ENCODE measurements at regions of chr20 and their contacts with region 1.

Region 1: DNA sequence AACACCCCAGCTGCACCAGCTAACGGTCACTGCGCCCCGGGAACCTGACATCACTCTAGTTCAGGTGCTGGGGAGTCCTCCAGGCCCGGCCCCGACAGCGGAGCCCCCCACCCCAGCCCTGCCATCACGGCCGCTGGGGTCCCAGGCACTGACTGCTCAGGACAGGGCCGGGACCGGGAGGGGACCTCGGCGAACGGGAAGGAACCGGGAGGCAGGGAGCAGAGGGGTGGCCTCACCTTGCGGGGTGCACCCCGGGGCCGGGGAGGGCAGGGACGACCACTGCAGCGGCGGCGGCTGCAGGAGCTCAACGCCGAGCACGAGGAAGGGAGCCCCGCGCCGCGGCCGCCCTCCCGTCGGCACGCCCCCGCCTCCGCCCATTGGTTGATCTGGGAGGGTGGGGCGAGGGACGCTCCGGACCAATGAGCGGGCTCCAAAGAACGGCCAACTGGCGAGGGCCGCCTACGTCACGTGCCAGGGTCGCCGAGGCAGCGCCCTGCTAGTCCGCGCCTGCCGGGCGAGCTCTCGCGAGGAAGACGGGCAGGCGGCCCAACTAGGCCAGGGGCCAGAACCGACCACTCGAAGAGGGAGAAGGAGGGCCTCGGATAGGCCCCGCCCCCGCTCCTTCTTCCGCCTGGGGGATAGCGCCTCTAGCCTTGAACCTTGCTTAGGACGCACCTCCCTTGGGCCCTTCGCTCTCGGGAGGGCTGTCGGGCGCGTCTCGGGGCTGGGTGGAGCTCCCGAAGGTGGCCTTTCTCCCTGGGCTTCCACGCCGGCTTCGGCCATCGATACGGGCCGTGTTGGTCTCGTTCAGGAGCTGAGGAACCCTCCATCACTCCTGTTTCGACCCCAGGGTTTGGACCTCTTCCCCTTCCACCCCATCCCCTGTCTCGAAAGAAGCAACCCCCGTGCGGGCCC is at the start of gene ADISSP:
- DNase-seq: peak; percentile 99
- ATAC-seq: peak; percentile 94
- H3K4me3 Mint-ChIP-seq: peak within 1 kb of the TSS; percentile 84
- H3K27ac Mint-ChIP-seq: peak within 1 kb of the TSS; percentile 88
- H3K4me1 Mint-ChIP-seq: peaks cover 23% of the 10 kb centered on the region
- H3K27me3 Mint-ChIP-seq: peaks cover 9% of the 10 kb centered on the region
- total RNA-seq, gene ADISSP: 32.5 to 37.0 TPM

Region 2: DNA sequence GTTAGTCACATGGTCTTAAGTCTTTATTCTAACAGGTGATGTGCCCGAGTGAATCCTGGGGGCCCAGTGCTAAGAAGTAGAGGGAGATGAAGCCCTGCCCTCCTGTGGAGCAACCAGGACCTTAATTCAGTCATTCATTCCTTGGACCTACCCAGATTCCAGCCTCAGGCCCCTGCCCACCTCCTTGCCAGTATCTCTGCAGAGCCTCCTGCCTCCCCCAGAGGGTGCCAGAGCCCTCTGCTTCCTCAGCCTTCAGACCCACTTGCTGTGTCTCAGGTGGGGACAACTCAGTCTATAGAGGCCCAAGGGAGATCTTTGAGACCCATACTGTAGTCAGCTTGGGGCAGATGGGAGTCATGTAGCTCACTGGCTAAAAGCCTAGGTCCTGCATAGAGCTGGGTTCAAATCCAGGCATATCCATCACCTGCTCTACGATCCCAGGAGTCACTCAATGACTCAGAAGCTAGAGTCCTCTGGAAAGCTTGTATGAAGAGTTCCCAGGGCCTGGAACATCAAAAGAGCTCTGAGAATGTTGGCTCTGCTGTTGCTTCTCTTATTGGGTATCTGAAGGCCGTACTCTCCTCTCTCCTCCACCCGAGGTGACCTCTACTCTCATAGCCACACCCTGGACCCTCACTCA is 51.4 kb before region 1 on chr20:
- CTCF ChIA-PET with region 1: interaction called, 10 read pairs
- DNase-seq: peak; percentile 57
- ATAC-seq: peak; percentile 88
- H3K4me3 Mint-ChIP-seq: no peak overlapping the region
- H3K27ac Mint-ChIP-seq: no peak overlapping the region
- H3K4me1 Mint-ChIP-seq: peaks cover 16% of the 10 kb centered on the region
- H3K27me3 Mint-ChIP-seq: peaks cover 21% of the 10 kb centered on the region

Region 3: GRCh38 chr20:3781153-3781910 is 13.6 kb after region 1 on chr20 and contains the start of gene SPEF1:
- CTCF ChIA-PET with region 1: interaction called, 37 read pairs
- DNase-seq: peak; percentile 65
- ATAC-seq: peak; percentile 49
- H3K4me3 Mint-ChIP-seq: peak within 1 kb of the TSS; percentile 27
- H3K27ac Mint-ChIP-seq: peak within 1 kb of the TSS; percentile 5
- H3K4me1 Mint-ChIP-seq: peaks cover 43% of the 10 kb centered on the region
- H3K27me3 Mint-ChIP-seq: peaks cover 25% of the 10 kb centered on the region
- total RNA-seq, gene SPEF1: 0.18 TPM in 1 of 2 experiments, not detected in the other

Region 4: DNA sequence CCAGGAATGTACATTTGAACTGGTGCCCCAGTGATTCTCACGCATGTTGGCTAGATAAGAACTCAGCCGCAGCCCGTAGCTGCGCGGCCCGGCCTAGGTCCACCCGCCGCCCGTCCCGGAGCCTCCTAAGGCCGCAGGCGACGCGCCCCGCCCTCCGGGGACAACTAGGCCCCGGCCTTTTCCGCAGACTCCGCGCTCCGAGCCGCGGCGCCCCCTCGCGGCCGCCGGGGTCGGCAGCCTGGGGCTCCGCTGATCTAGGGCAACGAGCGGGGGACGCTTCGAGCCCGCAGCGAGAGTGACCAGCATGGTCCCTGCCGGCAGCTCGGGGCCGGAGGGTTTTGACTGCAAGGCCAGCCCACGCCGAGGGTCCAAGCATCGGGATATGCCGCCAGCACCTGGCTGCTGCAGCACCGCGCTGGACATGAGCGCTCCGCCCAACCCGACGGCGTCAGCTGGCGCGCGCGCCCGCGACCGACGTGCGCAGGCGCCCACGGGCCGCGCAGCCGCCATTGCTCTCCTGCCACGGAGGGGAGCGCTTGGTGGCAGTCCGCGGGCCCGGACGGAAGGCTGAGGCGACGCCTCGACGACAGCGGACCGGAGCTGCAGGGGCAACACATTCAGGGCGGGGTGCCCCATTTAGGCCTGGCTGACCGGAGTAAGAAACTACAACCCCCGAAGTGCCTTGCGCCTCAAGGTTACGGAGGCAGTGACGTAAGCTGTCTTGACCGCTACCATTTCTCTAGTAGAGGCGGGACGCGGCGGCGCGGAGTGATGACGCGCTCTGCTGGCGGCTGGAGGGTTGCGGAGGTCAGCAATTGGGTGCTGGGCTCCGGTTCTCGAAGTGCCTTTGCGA is 52.6 kb after region 1 on chr20 and contains the start of gene AP5S1:
- CTCF ChIA-PET with region 1: interaction called, 24 read pairs
- DNase-seq: peak; percentile 97
- ATAC-seq: peak; percentile 82
- H3K4me3 Mint-ChIP-seq: peak within 1 kb of the TSS; percentile 85
- H3K27ac Mint-ChIP-seq: peak within 1 kb of the TSS; percentile 90
- H3K4me1 Mint-ChIP-seq: peaks cover 47% of the 10 kb centered on the region
- H3K27me3 Mint-ChIP-seq: no peaks in the 10 kb centered on the region
- total RNA-seq, gene AP5S1: 13.8 to 15.5 TPM

Measured in activated CD8-positive, alpha-beta memory T cell treated with anti-CD3 and anti-CD28 coated beads, Interleukin-2, amount 10 ng/mL, durations not matched to agents 7 days and 5 days (primary cell).